HepG2 (cell line): ENCODE measurements at regions of chr4 and their contacts with region 1.

Region 1: DNA sequence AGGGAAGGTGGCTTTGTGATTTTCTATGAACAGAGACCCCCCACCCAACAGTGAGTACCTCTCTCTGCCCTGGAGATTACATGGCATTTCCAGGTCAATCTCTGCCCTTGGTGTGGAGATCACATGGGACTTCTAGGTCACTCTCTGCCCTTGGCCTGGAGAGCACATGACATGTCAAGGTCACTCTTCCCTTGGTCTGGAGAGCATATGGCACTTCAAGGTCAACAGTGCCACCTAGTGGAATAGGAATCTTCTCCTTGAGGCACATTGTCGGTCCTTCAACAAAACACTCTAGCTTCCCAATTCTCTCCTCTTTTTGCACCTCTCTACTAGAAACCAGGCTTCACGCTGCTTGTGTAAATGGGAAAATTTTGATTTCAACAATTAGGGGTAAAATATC is 66.2 kb upstream of the TACR3 start:
- DNase-seq: peak; percentile 64
- ATAC-seq: peak; percentile 92
- H3K4me3 ChIP-seq: no peak overlapping the region
- H3K27ac ChIP-seq: no peak overlapping the region
- H3K4me1 ChIP-seq: no peaks in the 10 kb centered on the region
- H3K27me3 ChIP-seq: no peaks in the 10 kb centered on the region; a peak in 1 of 5 replicates
- CTCF ChIP-seq: peak; percentile 69
- EP300 ChIP-seq: no peak
- POLR2A ChIP-seq: no peak
- RAD21 ChIP-seq: no peak; the same call in 1 of the 2 replicates

Region 2: GRCh38 chr4:103498161-103499070 is 287.6 kb before region 1 on chr4:
- CTCF ChIA-PET with region 1: no interaction called
- POLR2A ChIA-PET with region 1: no interaction called
- in situ Hi-C with region 1: no loop called
- intact Hi-C with region 1: loop called (anchors 5 kb)
- DNase-seq: no peak
- ATAC-seq: no peak
- H3K4me3 ChIP-seq: no peak overlapping the region
- H3K27ac ChIP-seq: no peak overlapping the region
- H3K4me1 ChIP-seq: no peaks in the 10 kb centered on the region
- H3K27me3 ChIP-seq: no peaks in the 10 kb centered on the region
- CTCF ChIP-seq: no peak
- EP300 ChIP-seq: no peak
- POLR2A ChIP-seq: no peak
- RAD21 ChIP-seq: no peak